ENCODE measurements at regions of chr1 and their contacts with region 1.

Region 1: GRCh38 chr1:53860967-53861411 is 22.9 kb upstream of the NDC1 start:
- DNase-seq: peak; percentile 20 to 46 (median 45)
- H3K4me3 ChIP-seq: no peak overlapping the region
- H3K4me3 Mint-ChIP-seq: no peak overlapping the region
- H3K27ac ChIP-seq: no peak overlapping the region
- H3K27ac Mint-ChIP-seq: no peak overlapping the region
- H3K4me1 ChIP-seq: no peaks in the 10 kb centered on the region
- H3K4me1 Mint-ChIP-seq: peaks cover 2% of the 10 kb centered on the region
- H3K27me3 ChIP-seq: no peaks in the 10 kb centered on the region
- H3K27me3 Mint-ChIP-seq: peaks cover 0 to 2% (median 0%) of the 10 kb centered on the region in 3 donors
- CTCF ChIP-seq: peak; percentile 86

Region 2: GRCh38 chr1:53826367-53826766 is 34.6 kb before region 1 on chr1:
- intact Hi-C with region 1: no loop called
- DNase-seq: no peak
- H3K4me3 ChIP-seq: no peak overlapping the region
- H3K4me3 Mint-ChIP-seq: no peak overlapping the region
- H3K27ac ChIP-seq: no peak overlapping the region
- H3K27ac Mint-ChIP-seq: no peak overlapping the region
- H3K4me1 ChIP-seq: no peaks in the 10 kb centered on the region
- H3K4me1 Mint-ChIP-seq: peaks cover 9% of the 10 kb centered on the region
- H3K27me3 ChIP-seq: no peaks in the 10 kb centered on the region
- H3K27me3 Mint-ChIP-seq: peaks cover 0 to 2% (median 0%) of the 10 kb centered on the region in 3 donors
- CTCF ChIP-seq: no peak

Region 3: GRCh38 chr1:53959664-53960250 is 98.8 kb after region 1 on chr1:
- intact Hi-C with region 1: loop called (anchors 2 to 5 kb)
- DNase-seq: peak; percentile 18 to 30 (median 26)
- H3K4me3 ChIP-seq: no peak overlapping the region
- H3K4me3 Mint-ChIP-seq: no peak overlapping the region
- H3K27ac ChIP-seq: no peak overlapping the region
- H3K27ac Mint-ChIP-seq: no peak overlapping the region
- H3K4me1 ChIP-seq: peaks cover 7 to 15% of the 10 kb centered on the region in 2 donors
- H3K4me1 Mint-ChIP-seq: peaks cover 11% of the 10 kb centered on the region
- H3K27me3 ChIP-seq: no peaks in the 10 kb centered on the region
- H3K27me3 Mint-ChIP-seq: no peaks in the 10 kb centered on the region
- CTCF ChIP-seq: peak; percentile 69

Region 4: DNA sequence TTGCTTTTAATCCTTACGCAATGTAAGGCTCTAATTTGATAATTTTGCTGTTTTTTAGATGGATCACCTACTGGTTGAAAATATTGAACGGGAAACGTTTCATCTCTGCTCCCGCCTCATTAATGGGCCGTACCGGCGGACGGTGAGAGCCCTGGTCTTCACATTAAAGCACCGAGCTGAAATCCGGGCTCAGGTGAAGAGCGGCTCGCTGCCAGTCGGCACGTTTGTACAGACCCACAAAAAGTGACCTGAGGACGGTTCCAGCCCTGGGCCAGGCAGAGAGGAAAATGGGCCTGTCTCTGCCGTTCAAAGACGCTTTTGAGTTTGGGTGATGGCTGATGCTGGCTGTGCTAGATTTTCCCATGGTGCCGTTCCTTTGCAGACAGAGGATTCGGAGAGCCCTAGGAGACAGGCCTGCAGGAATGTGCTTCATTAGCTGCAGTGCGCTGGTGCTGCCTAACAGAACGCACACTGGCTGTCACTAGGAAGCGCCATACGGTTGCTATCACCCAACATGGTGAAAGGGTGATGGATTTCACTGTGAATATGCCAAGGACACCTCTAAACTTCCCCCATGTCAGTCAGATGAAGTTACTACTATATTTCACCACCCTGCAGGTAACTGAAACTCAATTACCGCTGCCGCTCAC is 235.4 kb after region 1 on chr1:
- intact Hi-C with region 1: no loop called
- DNase-seq: peak in 1 of 3 donors; percentile 2
- H3K4me3 ChIP-seq: peak overlapping the region; percentile 18 to 64 (median 22)
- H3K4me3 Mint-ChIP-seq: peak overlapping the region; percentile 65 to 88
- H3K27ac ChIP-seq: peak overlapping the region; percentile 41 to 83
- H3K27ac Mint-ChIP-seq: peak overlapping the region; percentile 82 to 92 (median 91)
- H3K4me1 ChIP-seq: peaks cover 17 to 28% of the 10 kb centered on the region in 2 donors
- H3K4me1 Mint-ChIP-seq: peaks cover 37% of the 10 kb centered on the region
- H3K27me3 ChIP-seq: no peaks in the 10 kb centered on the region
- H3K27me3 Mint-ChIP-seq: no peaks in the 10 kb centered on the region
- CTCF ChIP-seq: no peak